ENCODE measurements at regions of chr12 and their contacts with region 1.

Region 1: DNA sequence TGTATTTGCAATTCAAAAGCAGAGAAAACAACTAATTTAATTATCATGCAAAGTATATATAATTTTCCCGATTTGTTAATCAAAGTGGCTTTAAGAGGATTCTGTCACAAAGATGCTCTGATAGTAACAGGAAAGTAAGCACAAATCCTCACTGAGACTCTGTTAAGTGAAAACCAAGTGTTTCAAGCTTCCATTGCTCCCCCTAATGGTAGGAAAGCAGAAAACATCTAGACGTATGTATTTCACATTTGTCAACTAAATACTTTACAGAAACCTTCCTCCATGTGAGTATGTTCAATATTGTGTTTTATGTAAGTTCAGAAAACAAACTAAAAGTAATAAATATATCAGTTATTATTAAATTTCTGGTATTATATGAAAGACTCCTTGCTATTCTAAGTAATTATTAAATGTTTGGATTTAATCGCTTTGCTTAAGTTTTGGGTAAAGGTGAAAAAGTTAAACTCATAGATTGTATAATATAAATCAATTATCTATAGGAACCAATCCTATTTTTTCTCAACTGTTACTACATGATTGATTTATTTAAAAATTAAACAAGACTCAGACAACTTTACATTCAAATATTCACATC is 1.5 kb upstream of the NTS start:
- DNase-seq: no peak
- ATAC-seq: peak; percentile 83
- H3K4me3 ChIP-seq: no peak overlapping the region
- H3K27ac ChIP-seq: no peak overlapping the region
- H3K4me1 ChIP-seq: no peaks in the 10 kb centered on the region
- H3K27me3 ChIP-seq: no peaks in the 10 kb centered on the region
- CTCF ChIP-seq: peak; percentile 67 to 73 (median 70)
- EP300 ChIP-seq: no peak
- POLR2A ChIP-seq: no peak
- RAD21 ChIP-seq: peak; percentile 55

Region 2: DNA sequence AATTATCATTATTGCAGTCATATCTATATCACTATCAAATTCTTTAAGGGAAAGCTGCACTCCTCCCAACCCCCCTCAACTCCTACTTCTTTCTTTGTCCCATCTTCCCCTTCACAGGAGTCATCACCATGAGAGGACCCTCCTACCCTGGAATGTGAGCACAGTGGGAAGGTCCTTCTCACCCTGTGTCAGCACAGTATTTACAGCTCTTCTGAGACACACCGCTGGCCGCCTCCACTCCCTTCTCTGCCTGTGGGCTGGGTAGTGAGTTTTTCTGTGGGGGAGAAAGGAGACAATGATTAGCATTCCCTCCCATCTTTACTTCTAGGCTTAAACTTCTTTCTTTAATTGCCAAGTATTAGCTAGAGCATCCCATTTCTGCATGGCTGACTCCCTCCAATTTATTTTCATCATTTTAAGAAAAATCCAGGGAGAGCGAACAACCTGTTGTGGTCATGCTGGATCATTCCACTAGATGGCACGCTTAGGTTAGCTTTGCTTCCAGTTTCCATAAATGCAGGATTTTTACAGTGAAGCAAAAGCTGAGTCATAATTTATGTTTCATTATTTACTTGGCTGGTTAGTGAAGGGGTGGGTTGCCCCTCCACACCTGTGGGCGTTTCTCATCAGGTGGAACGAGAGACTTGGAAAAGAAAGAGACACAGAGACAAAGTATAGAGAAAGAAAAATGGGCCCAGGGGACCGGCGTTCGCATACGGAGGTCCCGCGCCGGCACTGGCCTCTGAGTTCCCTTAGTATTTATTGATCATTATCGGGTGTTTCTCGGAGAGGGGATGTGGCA is 404.0 kb before region 1 on chr12:
- CTCF ChIA-PET with region 1: interaction called, 44 read pairs
- POLR2A ChIA-PET with region 1: no interaction called
- RAD21 ChIA-PET with region 1: interaction called, 27 read pairs
- SMC1A ChIA-PET with region 1: interaction called, 24 read pairs
- in situ Hi-C with region 1: loop called (anchors 5 kb)
- intact Hi-C with region 1: loop called (anchors 1 kb)
- DNase-seq: peak; percentile 23
- ATAC-seq: peak; percentile 95
- H3K4me3 ChIP-seq: peak overlapping the region; percentile 31; the same call in 1 of the 2 replicates
- H3K27ac ChIP-seq: no peak overlapping the region
- H3K4me1 ChIP-seq: 0 out of 2 replicates have a peak, but pooled peaks cover 2% of the 10 kb centered on the region
- H3K27me3 ChIP-seq: no peaks in the 10 kb centered on the region
- CTCF ChIP-seq: peak; percentile 69 to 86 (median 79)
- EP300 ChIP-seq: no peak
- POLR2A ChIP-seq: no peak
- RAD21 ChIP-seq: peak; percentile 98

Region 3: DNA sequence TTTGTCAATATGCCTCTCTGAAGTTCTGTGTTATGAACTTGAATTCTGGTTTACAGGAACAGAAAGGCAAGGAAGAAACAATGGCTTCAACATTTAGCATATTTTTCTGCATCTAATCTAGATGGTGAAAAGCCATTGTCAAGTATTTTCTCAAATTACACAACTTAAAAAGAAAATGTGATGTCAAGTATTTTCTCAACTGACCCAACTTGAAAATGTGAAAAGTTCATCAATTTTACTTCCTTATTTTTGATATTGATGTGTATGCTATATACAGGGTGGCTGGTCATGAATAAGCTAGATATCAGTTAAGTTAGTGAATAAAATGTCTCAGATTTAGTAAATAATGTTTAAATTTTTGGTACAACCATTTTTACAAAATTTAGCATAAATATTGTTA is 395.8 kb before region 1 on chr12:
- CTCF ChIA-PET with region 1: interaction called, 34 read pairs
- POLR2A ChIA-PET with region 1: no interaction called
- RAD21 ChIA-PET with region 1: interaction called, 19 read pairs
- SMC1A ChIA-PET with region 1: interaction called, 22 read pairs
- in situ Hi-C with region 1: no loop called
- intact Hi-C with region 1: no loop called
- DNase-seq: no peak
- ATAC-seq: no peak
- H3K4me3 ChIP-seq: no peak overlapping the region
- H3K27ac ChIP-seq: no peak overlapping the region
- H3K4me1 ChIP-seq: no peaks in the 10 kb centered on the region
- H3K27me3 ChIP-seq: no peaks in the 10 kb centered on the region
- CTCF ChIP-seq: no peak
- EP300 ChIP-seq: no peak
- POLR2A ChIP-seq: no peak
- RAD21 ChIP-seq: no peak

Region 4: GRCh38 chr12:85575120-85576096 is 297.2 kb before region 1 on chr12:
- CTCF ChIA-PET with region 1: interaction called, 58 read pairs
- POLR2A ChIA-PET with region 1: no interaction called
- RAD21 ChIA-PET with region 1: interaction called, 27 read pairs
- SMC1A ChIA-PET with region 1: interaction called, 40 read pairs
- in situ Hi-C with region 1: loop called (anchors 5 kb)
- intact Hi-C with region 1: loop called (anchors 1 kb)
- DNase-seq: peak; percentile 13
- ATAC-seq: peak; percentile 100
- H3K4me3 ChIP-seq: no peak overlapping the region
- H3K27ac ChIP-seq: no peak overlapping the region
- H3K4me1 ChIP-seq: no peaks in the 10 kb centered on the region
- H3K27me3 ChIP-seq: no peaks in the 10 kb centered on the region
- CTCF ChIP-seq: peak; percentile 68 to 74 (median 68)
- EP300 ChIP-seq: no peak
- POLR2A ChIP-seq: no peak
- RAD21 ChIP-seq: peak; percentile 76

Region 5: GRCh38 chr12:85855305-85855704 is 17.3 kb before region 1 on chr12:
- CTCF ChIA-PET with region 1: interaction called, 23 read pairs
- POLR2A ChIA-PET with region 1: no interaction called
- RAD21 ChIA-PET with region 1: no interaction called
- SMC1A ChIA-PET with region 1: interaction called, 6 read pairs
- in situ Hi-C with region 1: no loop called
- intact Hi-C with region 1: no loop called
- DNase-seq: no peak
- ATAC-seq: no peak
- H3K4me3 ChIP-seq: no peak overlapping the region
- H3K27ac ChIP-seq: no peak overlapping the region
- H3K4me1 ChIP-seq: no peaks in the 10 kb centered on the region
- H3K27me3 ChIP-seq: no peaks in the 10 kb centered on the region
- CTCF ChIP-seq: no peak
- EP300 ChIP-seq: no peak
- POLR2A ChIP-seq: no peak
- RAD21 ChIP-seq: no peak